Activated naive CD4-positive, alpha-beta T cell treated with anti-CD3 and anti-CD28 coated beads for 36 hours (primary cell): ENCODE measurements at regions of chr1 and their contacts with region 1.

Region 1: DNA sequence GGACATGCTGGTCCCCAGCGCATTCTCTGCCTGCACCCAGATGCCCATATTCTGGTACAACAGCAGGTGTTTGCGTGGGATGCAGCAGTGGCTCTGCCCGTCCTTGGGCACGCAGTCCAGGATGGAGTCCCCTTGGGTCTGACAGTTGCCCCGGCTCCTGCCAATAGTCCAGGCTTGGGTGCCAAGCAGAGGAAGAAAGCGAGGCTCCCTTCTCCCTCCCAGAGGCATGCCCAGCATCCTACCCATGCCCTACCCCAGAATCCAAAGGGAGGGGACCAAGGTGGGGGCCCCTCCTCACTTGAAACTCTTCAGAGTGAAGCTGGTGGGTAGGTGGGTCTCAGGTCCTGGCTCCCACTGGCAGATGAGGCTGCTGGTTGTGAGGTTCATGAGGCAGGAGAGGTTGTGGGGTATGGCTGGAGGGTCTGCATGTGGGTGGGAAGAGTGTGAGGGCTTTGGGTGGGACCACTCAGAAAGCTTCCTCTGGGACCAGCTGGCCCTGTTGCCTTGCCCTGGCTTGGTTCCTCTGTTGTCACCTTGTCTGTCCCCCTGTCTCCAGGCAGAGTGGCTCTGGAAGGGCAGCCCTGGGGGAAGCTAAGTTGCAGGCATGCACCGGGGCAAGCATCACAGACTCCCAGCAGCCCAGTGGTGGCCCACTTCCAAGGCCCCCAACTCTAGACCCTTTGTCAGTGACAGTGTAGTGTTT is 9.1 kb downstream of the CSF3R start:
- DNase-seq: no peak
- H3K4me3 Mint-ChIP-seq: no peak overlapping the region
- H3K27ac Mint-ChIP-seq: no peak overlapping the region
- H3K4me1 Mint-ChIP-seq: peaks cover 4% of the 10 kb centered on the region
- H3K27me3 Mint-ChIP-seq: no peaks in the 10 kb centered on the region

Region 2: GRCh38 chr1:35980090-35980489 is 493.5 kb before region 1 on chr1:
- CTCF ChIA-PET with region 1: no interaction called
- intact Hi-C with region 1: no loop called
- DNase-seq: no peak
- H3K4me3 Mint-ChIP-seq: no peak overlapping the region
- H3K27ac Mint-ChIP-seq: no peak overlapping the region
- H3K4me1 Mint-ChIP-seq: no peaks in the 10 kb centered on the region
- H3K27me3 Mint-ChIP-seq: no peaks in the 10 kb centered on the region

Region 3: GRCh38 chr1:36123356-36123755 is 350.3 kb before region 1 on chr1:
- CTCF ChIA-PET with region 1: no interaction called
- intact Hi-C with region 1: no loop called
- DNase-seq: peak; percentile 17
- H3K4me3 Mint-ChIP-seq: no peak overlapping the region
- H3K27ac Mint-ChIP-seq: no peak overlapping the region
- H3K4me1 Mint-ChIP-seq: peaks cover 26% of the 10 kb centered on the region
- H3K27me3 Mint-ChIP-seq: peaks cover 35% of the 10 kb centered on the region

Region 4: GRCh38 chr1:36458654-36459309 is 14.8 kb before region 1 on chr1:
- CTCF ChIA-PET with region 1: no interaction called
- intact Hi-C with region 1: loop called (anchors 1 kb)
- DNase-seq: peak; percentile 80
- H3K4me3 Mint-ChIP-seq: peak overlapping the region; percentile 17
- H3K27ac Mint-ChIP-seq: peak overlapping the region; percentile 83
- H3K4me1 Mint-ChIP-seq: peaks cover 40% of the 10 kb centered on the region
- H3K27me3 Mint-ChIP-seq: no peaks in the 10 kb centered on the region